ENCODE measurements at regions of chr22 and their contacts with region 1.

Region 1: DNA sequence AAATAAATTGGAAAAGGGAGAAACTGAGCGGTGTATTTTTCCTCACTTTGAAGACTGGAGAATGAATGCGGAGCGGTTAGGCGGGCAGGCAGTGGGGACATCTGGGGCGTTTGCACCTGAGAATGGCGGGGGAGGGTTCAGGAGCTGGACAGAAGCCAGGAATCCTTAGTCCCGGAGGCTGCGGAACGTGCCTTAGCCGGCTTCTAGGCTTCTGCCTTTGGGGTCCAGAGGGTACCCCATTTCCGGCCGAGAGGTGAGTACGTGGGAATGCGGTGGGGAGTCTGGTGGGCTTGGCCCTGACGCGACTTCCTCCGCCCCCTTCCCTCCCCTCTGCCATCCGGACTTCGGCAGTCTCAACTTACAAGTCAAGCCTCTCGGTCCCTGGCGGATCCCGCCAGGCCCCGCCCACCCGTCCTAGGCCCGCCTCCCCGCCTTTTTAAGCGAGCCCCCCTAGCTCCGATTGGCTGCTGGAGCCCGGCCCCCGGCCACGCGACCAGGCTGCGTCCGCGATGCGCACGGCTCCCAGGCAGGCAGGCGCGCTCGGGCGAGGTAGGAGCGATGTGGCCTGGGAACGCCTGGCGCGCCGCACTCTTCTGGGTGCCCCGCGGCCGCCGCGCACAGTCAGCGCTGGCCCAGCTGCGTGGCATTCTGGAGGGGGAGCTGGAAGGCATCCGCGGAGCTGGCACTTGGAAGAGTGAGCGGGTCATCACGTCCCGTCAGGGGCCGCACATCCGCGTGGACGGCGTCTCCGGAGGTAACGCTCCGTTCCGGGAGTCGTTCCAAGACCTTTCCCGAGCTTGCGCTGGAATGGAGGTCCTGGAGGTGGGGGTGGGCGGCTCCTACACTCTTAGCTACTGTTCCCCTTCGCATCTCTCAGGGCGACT is at the start of gene GCAT:
- DNase-seq: peak; percentile 95
- ATAC-seq: peak; percentile 81
- H3K4me3 ChIP-seq: peak within 1 kb of the TSS; percentile 80 to 95
- H3K27ac ChIP-seq: peak within 1 kb of the TSS; percentile 87
- H3K4me1 ChIP-seq: peaks cover 15 to 60% of the 10 kb centered on the region in 2 experiments; a peak in 3 of 4 replicates
- H3K27me3 ChIP-seq: no peaks in the 10 kb centered on the region
- CTCF ChIP-seq: no peak
- POLR2A ChIP-seq: peak; percentile 78
- RAD21 ChIP-seq: no peak
- total RNA-seq, gene GCAT: 88.7 TPM

Region 2: GRCh38 chr22:37658133-37659065 is 149.3 kb before region 1 on chr22 and contains the start of gene PDXP:
- CTCF ChIA-PET with region 1: no interaction called
- POLR2A ChIA-PET with region 1: interaction called, 10 read pairs
- RAD21 ChIA-PET with region 1: no interaction called
- intact Hi-C with region 1: no loop called
- DNase-seq: peak; percentile 100
- ATAC-seq: peak; percentile 96
- H3K4me3 ChIP-seq: peak within 1 kb of the TSS; percentile 86 to 93
- H3K27ac ChIP-seq: peak within 1 kb of the TSS; percentile 86
- H3K4me1 ChIP-seq: peaks cover 11 to 30% of the 10 kb centered on the region in 2 experiments; a peak in 3 of 4 replicates
- H3K27me3 ChIP-seq: no peaks in the 10 kb centered on the region
- CTCF ChIP-seq: no peak
- POLR2A ChIP-seq: peak; percentile 77
- RAD21 ChIP-seq: no peak
- total RNA-seq, gene PDXP: 42.7 TPM

Region 3: DNA sequence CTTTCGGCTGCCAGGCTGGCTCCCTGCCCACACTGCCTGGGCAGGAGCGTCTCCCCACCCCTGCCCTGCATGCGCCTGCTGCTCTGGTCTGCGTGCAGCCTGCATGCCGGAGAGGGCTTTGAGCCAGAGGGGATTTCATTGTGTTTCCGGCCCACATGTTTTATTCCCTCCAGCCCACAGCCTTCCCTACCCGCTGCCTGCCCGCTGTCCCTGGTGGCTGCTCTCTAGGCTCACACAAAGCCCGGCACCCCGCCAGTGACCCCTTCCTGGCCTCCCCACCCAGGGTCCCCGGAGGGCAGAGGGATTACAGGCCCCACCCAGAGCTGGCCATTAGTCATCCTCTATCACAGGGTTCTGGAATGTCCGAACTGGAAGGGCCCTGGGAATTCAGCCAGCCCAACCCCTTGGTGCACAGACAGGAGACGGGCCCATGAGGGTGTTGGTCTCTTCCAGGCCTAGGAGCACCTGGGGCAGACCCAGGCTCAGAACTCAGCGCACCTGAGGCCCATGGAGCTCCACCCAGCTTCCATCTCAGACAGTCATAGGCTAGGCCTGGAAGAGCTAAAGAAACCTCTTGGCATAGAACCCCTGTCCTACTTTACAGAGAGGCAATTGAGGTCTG is 55.1 kb before region 1 on chr22:
- CTCF ChIA-PET with region 1: no interaction called
- POLR2A ChIA-PET with region 1: interaction called, 20 read pairs
- RAD21 ChIA-PET with region 1: no interaction called
- intact Hi-C with region 1: no loop called
- DNase-seq: peak; percentile 92
- ATAC-seq: peak; percentile 67
- H3K4me3 ChIP-seq: peak overlapping the region; percentile 94 to 98
- H3K27ac ChIP-seq: peak overlapping the region; percentile 98
- H3K4me1 ChIP-seq: peaks cover 65 to 79% of the 10 kb centered on the region in 2 experiments
- H3K27me3 ChIP-seq: no peaks in the 10 kb centered on the region
- CTCF ChIP-seq: 0 out of 6 replicates have a peak, but pooled peaks of 1 of the 3 experiments have one; percentile 25
- POLR2A ChIP-seq: no peak
- RAD21 ChIP-seq: no peak

Region 4: DNA sequence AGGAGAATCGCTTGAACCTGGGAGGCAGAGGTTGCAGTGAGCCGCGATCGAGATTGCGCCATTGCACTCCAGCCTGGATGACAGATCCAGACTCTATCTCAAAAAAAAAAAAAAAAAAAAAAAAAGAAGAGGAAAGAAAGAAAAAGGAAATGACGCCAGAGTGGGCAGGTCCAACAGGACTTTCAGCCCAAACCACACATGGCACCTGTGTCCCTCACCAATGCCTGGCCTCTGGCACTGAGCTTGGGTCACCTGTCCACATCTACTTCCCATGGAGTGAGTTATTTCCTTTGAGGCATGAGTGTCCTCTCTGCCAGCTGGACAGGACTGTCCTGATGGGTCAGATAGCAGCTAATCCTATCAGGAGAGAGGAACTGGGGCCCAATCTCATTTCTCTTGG is 15.2 kb before region 1 on chr22:
- CTCF ChIA-PET with region 1: no interaction called
- POLR2A ChIA-PET with region 1: interaction called, 21 read pairs
- RAD21 ChIA-PET with region 1: no interaction called
- intact Hi-C with region 1: no loop called
- DNase-seq: no peak
- ATAC-seq: no peak
- H3K4me3 ChIP-seq: no peak overlapping the region
- H3K27ac ChIP-seq: no peak overlapping the region; the same call in 1 of the 2 replicates
- H3K4me1 ChIP-seq: peaks cover 9 to 39% of the 10 kb centered on the region in 2 experiments; a peak in 3 of 4 replicates
- H3K27me3 ChIP-seq: no peaks in the 10 kb centered on the region
- CTCF ChIP-seq: no peak
- POLR2A ChIP-seq: no peak
- RAD21 ChIP-seq: no peak

Region 5: GRCh38 chr22:37843741-37843990 is 36.0 kb after region 1 on chr22:
- CTCF ChIA-PET with region 1: no interaction called
- POLR2A ChIA-PET with region 1: interaction called, 19 read pairs
- RAD21 ChIA-PET with region 1: no interaction called
- intact Hi-C with region 1: no loop called
- DNase-seq: no peak
- ATAC-seq: peak; percentile 57
- H3K4me3 ChIP-seq: peak overlapping the region; percentile 63 to 75
- H3K27ac ChIP-seq: peak overlapping the region; percentile 97
- H3K4me1 ChIP-seq: peaks cover 8 to 26% of the 10 kb centered on the region in 2 experiments
- H3K27me3 ChIP-seq: no peaks in the 10 kb centered on the region
- CTCF ChIP-seq: no peak
- POLR2A ChIP-seq: no peak
- RAD21 ChIP-seq: no peak

Region 6: DNA sequence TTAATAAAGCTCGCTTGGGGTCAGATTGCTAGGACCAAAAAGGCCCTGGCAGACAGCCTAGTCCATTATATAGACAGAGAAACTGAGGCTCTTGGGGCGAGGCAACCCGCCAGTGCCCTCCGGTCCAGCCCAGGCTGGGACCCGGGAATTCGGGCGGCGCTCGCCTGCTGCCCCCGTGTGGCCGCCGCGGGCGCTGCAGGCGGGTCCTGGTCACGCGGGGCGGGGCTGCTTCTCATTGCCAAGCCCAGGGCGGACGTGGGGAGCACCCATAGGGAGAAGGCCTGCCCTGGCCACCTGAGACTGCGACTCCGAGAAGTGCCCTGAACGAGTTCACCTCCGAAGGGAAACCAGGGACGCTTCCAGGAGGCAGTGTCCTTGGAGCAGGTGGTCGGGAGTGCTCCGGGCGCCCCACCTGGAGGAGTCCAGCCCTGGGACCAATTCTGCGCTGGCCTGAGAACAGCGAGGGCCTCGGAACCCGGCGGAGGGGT is 545.5 kb after region 1 on chr22:
- CTCF ChIA-PET with region 1: no interaction called
- POLR2A ChIA-PET with region 1: no interaction called
- RAD21 ChIA-PET with region 1: no interaction called
- intact Hi-C with region 1: no loop called
- DNase-seq: peak; percentile 8
- ATAC-seq: peak; percentile 90
- H3K4me3 ChIP-seq: no peak overlapping the region
- H3K27ac ChIP-seq: no peak overlapping the region
- H3K4me1 ChIP-seq: peaks cover 0 to 6% of the 10 kb centered on the region in 2 experiments; a peak in 1 of 4 replicates
- H3K27me3 ChIP-seq: no peaks in the 10 kb centered on the region
- CTCF ChIP-seq: peak; percentile 81 to 96 (median 94)
- POLR2A ChIP-seq: no peak
- RAD21 ChIP-seq: peak; percentile 90

Measured in HCT116 (cell line).